Breast epithelium (tissue), 4 donors: ENCODE measurements at regions of chr2 and their contacts with region 1.

Region 1: DNA sequence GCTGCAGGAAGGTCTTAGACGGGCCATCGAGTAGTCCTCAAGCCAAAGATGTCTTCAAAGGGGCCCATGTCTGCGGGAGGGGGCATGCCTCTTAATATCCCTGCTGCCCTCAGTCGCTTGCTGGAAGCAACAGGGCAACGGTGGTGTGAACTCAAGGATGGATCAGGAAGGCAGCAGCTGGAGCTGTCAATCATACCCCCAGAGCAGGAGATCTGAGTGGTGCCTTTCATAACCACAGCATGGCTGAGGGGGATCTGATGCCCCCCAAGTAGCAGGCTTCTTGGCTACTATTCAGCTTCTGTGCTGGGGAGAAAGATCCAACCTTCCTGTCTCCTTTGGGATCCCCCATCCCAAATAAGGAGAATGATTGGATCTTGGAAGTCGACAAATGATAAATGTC is 46.4 kb downstream of the INSIG2 start:
- DNase-seq: no peak
- H3K4me3 ChIP-seq: no peak overlapping the region
- H3K27ac ChIP-seq: no peak overlapping the region
- H3K4me1 ChIP-seq: no peaks in the 10 kb centered on the region
- H3K27me3 ChIP-seq: no peaks in the 10 kb centered on the region
- CTCF ChIP-seq: no peak
- POLR2A ChIP-seq: no peak

Region 2: GRCh38 chr2:118492335-118492734 is 357.7 kb after region 1 on chr2:
- intact Hi-C with region 1: loop called (anchors 5 kb)
- DNase-seq: no peak
- H3K4me3 ChIP-seq: no peak overlapping the region
- H3K27ac ChIP-seq: no peak overlapping the region
- H3K4me1 ChIP-seq: no peaks in the 10 kb centered on the region
- H3K27me3 ChIP-seq: no peaks in the 10 kb centered on the region
- CTCF ChIP-seq: no peak
- POLR2A ChIP-seq: no peak